ENCODE measurements at regions of chr21 and their contacts with region 1.

Region 1: DNA sequence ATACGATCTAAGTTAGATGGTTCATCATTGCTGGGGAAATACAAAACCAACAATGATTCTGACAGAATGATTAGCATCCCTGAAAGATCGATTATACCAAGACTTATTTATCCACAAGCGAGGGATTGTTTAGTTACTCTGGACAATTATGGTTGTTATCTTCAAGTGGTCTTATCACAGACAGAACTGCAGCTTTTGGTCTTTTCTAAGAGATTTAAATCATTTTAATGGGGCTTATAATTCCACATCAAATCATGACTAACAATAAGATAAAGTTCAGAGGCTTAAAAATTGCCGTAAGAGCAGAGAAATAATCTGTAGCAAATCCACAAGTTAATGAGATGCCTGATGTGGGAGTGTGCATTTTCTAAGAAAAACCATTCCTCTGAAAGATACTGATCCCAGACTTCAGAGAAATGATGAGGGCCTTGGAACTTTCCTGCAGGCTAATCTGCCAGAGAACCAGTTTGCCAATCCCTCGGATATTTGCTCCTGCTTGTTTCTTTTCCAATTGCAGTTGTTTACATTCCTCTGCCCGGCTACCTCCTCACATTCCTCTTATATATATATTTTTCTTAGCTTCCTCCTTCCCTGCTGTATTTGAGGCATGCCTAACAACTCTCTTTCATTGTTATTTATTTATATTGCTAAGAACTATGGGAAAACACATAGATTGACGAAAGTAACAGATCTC is 134.8 kb downstream of the BACH1 start:
- DNase-seq: no peak
- CTCF ChIP-seq: no peak

Region 2: DNA sequence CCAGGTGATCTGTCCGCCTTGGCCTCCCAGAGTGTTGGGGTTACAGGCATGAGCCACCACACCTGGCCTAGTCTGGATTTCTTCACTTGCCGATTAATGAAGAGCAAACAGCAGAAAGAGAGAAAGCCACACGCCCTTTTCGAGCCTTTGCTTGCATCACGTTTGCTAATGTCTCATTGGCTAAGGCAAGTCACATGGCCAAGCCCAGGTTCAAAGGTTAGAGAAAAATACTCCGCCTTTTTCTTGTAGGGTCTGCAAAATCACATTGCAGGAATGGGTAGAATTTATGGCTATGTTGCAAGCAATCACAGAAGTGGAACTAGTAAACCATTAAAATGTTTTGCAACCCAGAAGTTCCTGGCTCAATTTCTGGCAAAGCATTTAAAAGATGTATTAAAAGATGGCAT is 161.6 kb before region 1 on chr21:
- CTCF ChIA-PET with region 1: no interaction called
- POLR2A ChIA-PET with region 1: no interaction called
- DNase-seq: no peak
- CTCF ChIP-seq: no peak

Region 3: DNA sequence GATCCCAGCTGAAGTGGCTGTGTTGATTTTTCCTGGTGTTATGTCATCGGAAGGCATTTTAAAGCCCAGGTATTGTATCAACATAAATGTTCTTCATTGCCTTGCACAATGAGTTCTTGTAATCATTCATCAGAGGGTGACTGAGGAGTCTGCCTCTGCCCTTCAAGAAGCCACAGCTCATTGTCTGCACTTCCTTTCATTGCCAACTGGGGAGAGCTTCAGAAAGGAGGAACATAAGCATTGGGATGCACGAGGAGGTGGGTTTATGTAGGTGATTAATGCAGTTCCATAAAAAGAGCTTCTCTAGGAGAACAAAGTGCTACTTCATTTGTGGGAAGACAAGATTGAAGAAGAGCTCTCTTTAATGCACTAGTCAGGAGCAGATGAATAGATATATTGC is 10.4 kb before region 1 on chr21:
- CTCF ChIA-PET with region 1: interaction called, 13 read pairs
- POLR2A ChIA-PET with region 1: no interaction called
- DNase-seq: no peak
- CTCF ChIP-seq: no peak